ENCODE measurements at regions of chr19 and their contacts with region 1.

Region 1: GRCh38 chr19:18160971-18161635 is 8.1 kb downstream of the PIK3R2 start:
- DNase-seq: peak; percentile 77
- ATAC-seq: peak; percentile 84
- H3K4me3 Mint-ChIP-seq: peak overlapping the region; percentile 42
- H3K27ac Mint-ChIP-seq: no peak overlapping the region
- H3K4me1 Mint-ChIP-seq: peaks cover 15% of the 10 kb centered on the region
- H3K27me3 Mint-ChIP-seq: no peaks in the 10 kb centered on the region
- CTCF ChIP-seq: peak; percentile 64; the same call in 1 of the 2 replicates

Region 2: DNA sequence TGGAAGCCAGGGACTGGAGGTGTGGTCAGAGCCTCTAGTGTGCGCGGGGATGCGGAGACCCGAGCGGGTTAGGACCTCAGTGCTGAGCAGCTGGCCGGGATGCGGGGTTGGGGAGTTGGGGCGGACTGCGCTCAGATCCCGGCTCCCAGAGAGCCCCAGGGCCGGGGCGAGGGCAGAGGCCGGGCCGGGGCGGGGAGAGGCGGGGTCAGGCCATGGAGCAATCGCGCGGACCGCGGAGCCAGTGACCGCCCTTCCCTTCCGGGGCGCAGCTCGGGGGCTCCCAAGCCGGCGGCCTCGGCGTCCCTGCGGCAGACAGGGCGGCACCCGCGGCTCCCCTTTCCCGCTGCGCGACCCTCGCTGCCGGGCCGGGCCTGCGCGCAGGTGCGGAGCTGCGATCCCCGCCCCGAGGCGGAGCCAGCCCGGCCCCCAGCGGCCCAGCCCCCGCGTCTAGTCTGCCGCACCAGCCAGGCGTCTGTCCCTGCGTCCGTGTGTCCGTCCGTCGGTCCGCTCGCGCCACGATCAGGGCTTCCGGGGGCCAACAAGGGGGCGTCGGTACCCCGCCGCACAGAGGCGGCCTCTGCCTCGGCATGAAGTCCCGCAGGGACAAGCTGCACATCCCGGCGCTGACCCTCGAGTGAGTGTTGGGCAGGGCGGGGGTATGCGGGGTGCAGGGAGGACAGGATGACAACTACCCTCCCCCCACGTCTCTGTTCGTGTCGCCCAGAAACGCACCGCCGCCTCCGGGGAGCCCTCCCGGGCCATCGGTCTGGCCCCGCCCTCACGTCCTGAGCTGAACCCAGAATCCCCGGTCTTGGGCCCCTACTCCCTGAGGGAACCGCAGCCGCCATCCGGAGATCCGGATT is 51.1 kb before region 1 on chr19:
- CTCF ChIA-PET with region 1: interaction called, 40 read pairs
- POLR2A ChIA-PET with region 1: interaction called, 4 read pairs
- DNase-seq: peak; percentile 60
- ATAC-seq: peak; percentile 66
- H3K4me3 Mint-ChIP-seq: peak overlapping the region; percentile 78
- H3K27ac Mint-ChIP-seq: no peak overlapping the region
- H3K4me1 Mint-ChIP-seq: peaks cover 11% of the 10 kb centered on the region
- H3K27me3 Mint-ChIP-seq: peaks cover 33% of the 10 kb centered on the region
- CTCF ChIP-seq: no peak

Region 3: GRCh38 chr19:18173572-18174288 is 12.6 kb after region 1 on chr19 and contains the start of gene IFI30:
- CTCF ChIA-PET with region 1: interaction called, 16 read pairs
- POLR2A ChIA-PET with region 1: no interaction called
- DNase-seq: peak; percentile 77
- ATAC-seq: peak; percentile 82
- H3K4me3 Mint-ChIP-seq: peak within 1 kb of the TSS; percentile 80
- H3K27ac Mint-ChIP-seq: no peak within 1 kb of the TSS
- H3K4me1 Mint-ChIP-seq: peaks cover 9% of the 10 kb centered on the region
- H3K27me3 Mint-ChIP-seq: peaks cover 19% of the 10 kb centered on the region
- CTCF ChIP-seq: no peak
- total RNA-seq, gene IFI30: 20.2 to 30.3 TPM (median 26.2 TPM) in 3 replicates

Region 4: DNA sequence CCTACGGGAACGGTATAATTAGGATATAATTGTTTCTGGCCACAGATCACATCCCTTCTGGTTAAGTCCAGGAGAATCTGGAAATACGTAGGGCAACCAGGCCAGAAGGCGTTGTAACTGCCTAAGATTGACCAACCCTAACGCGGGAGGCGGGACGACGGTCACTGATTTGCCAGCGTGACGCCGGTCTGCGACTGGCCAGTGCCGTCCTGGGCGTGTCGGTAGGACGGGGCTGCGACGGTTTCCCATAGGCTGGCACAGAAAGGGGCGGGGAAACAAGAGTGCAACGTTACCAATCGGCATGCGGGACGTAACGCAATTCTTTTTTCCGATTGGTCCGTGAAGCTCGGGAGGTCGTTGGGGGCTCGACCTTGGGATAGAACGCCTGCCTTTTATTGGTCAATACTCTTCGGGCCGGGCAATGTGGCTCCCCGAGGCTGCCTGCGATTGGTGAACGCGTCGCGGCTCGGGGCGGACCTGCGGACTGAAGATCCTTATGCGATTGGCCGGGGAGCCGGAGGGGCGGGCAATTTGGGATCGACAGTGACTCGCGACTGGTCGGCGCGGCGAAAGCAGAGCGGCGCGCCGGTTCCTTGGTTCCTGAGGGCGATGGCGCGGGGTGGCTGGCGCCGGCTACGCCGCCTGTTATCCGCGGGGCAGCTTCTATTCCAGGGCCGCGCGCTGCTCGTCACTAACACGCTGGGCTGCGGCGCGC is 31.7 kb after region 1 on chr19 and contains the start of gene MPV17L2:
- CTCF ChIA-PET with region 1: interaction called, 16 read pairs
- POLR2A ChIA-PET with region 1: no interaction called
- DNase-seq: peak; percentile 99
- ATAC-seq: peak; percentile 94
- H3K4me3 Mint-ChIP-seq: peak within 1 kb of the TSS; percentile 82
- H3K27ac Mint-ChIP-seq: peak within 1 kb of the TSS; percentile 97
- H3K4me1 Mint-ChIP-seq: peaks cover 20% of the 10 kb centered on the region
- H3K27me3 Mint-ChIP-seq: peaks cover 2% of the 10 kb centered on the region; the same call in 1 of the 2 replicates
- CTCF ChIP-seq: no peak
- total RNA-seq, gene MPV17L2: 26.3 to 29.8 TPM (median 28.0 TPM) in 3 replicates

Region 5: DNA sequence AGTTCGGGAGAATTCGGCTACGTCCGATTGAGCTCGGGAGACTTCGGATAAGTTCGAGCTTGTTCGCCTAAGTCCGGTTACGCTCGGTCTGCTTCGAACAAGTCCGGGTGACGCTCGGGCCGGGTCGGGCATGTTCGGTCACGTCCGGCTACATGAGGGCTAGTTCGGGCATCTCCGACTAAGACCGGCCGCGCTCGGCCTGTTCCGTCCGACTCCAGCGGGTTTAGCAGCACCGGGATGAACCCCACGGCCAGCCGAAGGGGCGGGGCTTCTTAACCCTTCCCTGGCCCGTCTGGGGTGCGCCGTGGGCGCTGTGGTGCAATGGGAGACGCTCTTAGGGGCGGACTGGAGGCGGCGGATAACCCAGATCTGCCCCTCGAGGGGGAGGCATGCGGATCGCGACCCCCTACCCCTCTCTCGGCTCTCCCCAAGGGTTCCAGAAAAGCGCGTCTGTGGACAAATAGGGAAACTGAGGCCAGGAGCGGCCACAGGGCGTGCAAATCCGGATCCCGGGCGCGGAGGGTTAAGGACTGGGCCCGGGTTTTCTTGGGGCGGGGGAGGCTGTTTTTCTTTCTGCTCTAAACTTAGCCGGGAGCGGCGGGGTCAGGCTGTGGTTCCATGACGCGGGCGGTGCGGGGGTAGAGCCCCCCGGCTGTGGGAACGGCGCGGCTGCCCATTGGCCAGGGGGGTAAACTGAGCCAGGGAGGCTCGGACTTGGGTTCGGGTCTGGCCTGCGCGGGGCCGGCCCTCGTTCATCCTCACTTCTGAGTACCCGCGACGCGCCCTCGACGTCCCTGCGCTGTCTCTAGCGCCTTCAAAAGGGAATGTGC is 63.6 kb after region 1 on chr19:
- CTCF ChIA-PET with region 1: interaction called, 10 read pairs
- POLR2A ChIA-PET with region 1: no interaction called
- DNase-seq: peak; percentile 100
- ATAC-seq: peak; percentile 91
- H3K4me3 Mint-ChIP-seq: peak overlapping the region; percentile 92
- H3K27ac Mint-ChIP-seq: peak overlapping the region; percentile 100
- H3K4me1 Mint-ChIP-seq: peaks cover 30% of the 10 kb centered on the region
- H3K27me3 Mint-ChIP-seq: peaks cover 42% of the 10 kb centered on the region
- CTCF ChIP-seq: no peak

Measured in WTC11 (cell line).